Activated naive CD4-positive, alpha-beta T cell treated with anti-CD3 and anti-CD28 coated beads for 36 hours (primary cell): ENCODE measurements at regions of chr1 and their contacts with region 1.

Region 1: DNA sequence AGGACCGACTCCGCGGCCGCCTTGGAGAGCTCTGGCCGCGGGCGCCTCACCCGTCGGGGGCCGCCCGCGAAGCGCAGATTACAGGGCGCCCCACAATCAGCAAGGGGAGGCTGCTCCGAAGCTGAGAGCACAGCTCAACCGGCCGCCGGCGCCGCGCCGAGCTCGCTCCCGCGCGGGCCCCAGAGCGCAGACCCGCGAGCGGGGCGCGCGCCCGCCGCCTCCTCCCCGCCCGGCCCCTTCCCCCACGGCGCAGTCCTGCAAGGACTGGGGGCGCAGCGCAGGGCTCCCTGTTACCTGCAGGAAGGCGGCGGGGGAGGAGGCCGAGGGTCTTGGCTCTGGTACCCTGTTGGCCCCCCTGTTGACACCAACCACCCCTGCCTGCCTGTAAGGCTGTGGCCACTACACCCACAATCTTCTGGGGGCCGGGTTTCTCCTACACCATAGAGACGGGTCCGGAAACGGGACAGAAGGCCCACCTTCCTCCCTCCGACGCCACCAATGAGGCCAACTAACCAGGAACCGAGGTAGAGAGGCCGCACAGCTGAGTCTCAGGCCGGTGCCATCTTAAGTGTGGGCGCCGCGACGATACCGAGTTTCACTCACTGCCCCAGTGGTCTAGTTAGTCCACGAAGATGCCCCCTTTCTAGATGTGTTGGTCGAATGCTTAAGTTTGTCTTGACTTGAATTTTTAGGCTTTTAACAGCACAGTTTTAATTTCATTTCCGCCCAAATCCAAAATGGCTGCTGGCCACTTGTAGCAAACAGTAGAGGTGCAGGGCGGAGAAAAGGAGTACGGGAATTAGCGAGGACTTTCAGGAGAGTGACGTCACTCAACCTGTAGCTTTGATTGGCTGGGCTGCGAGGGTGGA is at the start of gene SCYL3:
- DNase-seq: peak; percentile 94
- H3K4me3 Mint-ChIP-seq: peak within 1 kb of the TSS; percentile 87
- H3K27ac Mint-ChIP-seq: peak within 1 kb of the TSS; percentile 100
- H3K4me1 Mint-ChIP-seq: peaks cover 34% of the 10 kb centered on the region
- H3K27me3 Mint-ChIP-seq: no peaks in the 10 kb centered on the region
- total RNA-seq, gene SCYL3: 8.8 TPM

Region 2: DNA sequence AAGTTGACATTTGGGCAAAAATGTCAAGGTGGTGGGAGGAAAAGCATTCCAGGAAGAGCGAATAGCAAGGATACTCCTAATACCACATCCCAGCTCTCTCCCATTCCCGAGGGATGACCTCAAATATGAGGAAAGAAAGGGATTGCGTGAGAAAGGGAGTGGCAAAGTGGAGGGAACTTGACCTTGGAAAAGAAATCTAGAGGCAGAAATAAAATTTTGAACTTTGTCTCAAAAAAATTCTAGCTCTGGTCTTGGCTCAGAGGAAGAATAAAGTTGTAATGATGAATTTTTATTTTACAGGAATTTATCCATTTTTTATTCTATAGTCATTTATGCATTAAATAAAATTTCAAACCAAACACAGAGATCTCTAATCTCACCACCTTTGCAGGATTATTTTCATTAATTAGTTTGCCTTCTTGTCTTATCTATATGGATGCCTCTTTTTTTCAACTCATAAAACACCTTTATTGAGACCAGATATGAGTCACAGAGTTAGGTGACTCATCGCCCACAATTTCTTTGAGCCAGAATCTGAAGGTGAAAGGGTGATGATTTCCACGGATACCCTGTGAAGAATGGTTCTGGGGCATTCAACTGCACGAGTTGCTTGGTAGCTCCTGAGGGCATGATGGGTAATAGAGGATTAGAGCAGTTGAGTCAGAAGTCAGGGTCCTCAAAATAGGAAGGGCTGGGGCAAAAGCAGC is 1485.0 kb before region 1 on chr1:
- CTCF ChIA-PET with region 1: no interaction called
- intact Hi-C with region 1: loop called (anchors 10 kb)
- DNase-seq: peak; percentile 82
- H3K4me3 Mint-ChIP-seq: no peak overlapping the region
- H3K27ac Mint-ChIP-seq: peak overlapping the region; percentile 32
- H3K4me1 Mint-ChIP-seq: peaks cover 34% of the 10 kb centered on the region
- H3K27me3 Mint-ChIP-seq: no peaks in the 10 kb centered on the region

Region 3: GRCh38 chr1:169595764-169596711 is 297.7 kb before region 1 on chr1:
- CTCF ChIA-PET with region 1: interaction called, 3 read pairs
- intact Hi-C with region 1: loop called (anchors 2 kb)
- DNase-seq: peak; percentile 70
- H3K4me3 Mint-ChIP-seq: no peak overlapping the region
- H3K27ac Mint-ChIP-seq: no peak overlapping the region
- H3K4me1 Mint-ChIP-seq: peaks cover 63% of the 10 kb centered on the region
- H3K27me3 Mint-ChIP-seq: no peaks in the 10 kb centered on the region

Region 4: GRCh38 chr1:169794530-169795416 is 99.0 kb before region 1 on chr1 and contains the start of gene METTL18:
- CTCF ChIA-PET with region 1: no interaction called
- intact Hi-C with region 1: loop called (anchors 1 kb)
- DNase-seq: peak; percentile 97
- H3K4me3 Mint-ChIP-seq: peak within 1 kb of the TSS; percentile 99
- H3K27ac Mint-ChIP-seq: peak within 1 kb of the TSS; percentile 99
- H3K4me1 Mint-ChIP-seq: peaks cover 48% of the 10 kb centered on the region
- H3K27me3 Mint-ChIP-seq: no peaks in the 10 kb centered on the region
- total RNA-seq, gene METTL18: 10.6 to 11.1 TPM

Region 5: GRCh38 chr1:169873607-169874209 is 20.0 kb before region 1 on chr1:
- CTCF ChIA-PET with region 1: no interaction called
- intact Hi-C with region 1: no loop called
- DNase-seq: no peak
- H3K4me3 Mint-ChIP-seq: no peak overlapping the region
- H3K27ac Mint-ChIP-seq: no peak overlapping the region
- H3K4me1 Mint-ChIP-seq: peaks cover 3% of the 10 kb centered on the region
- H3K27me3 Mint-ChIP-seq: no peaks in the 10 kb centered on the region

Region 6: GRCh38 chr1:170068923-170069322 is 175.2 kb after region 1 on chr1:
- CTCF ChIA-PET with region 1: no interaction called
- intact Hi-C with region 1: loop called (anchors 1 kb)
- DNase-seq: no peak
- H3K4me3 Mint-ChIP-seq: peak overlapping the region; percentile 13
- H3K27ac Mint-ChIP-seq: peak overlapping the region; percentile 65
- H3K4me1 Mint-ChIP-seq: peaks cover 59% of the 10 kb centered on the region
- H3K27me3 Mint-ChIP-seq: no peaks in the 10 kb centered on the region

Region 7: GRCh38 chr1:170114906-170115305 is 221.2 kb after region 1 on chr1:
- CTCF ChIA-PET with region 1: no interaction called
- intact Hi-C with region 1: no loop called
- DNase-seq: no peak
- H3K4me3 Mint-ChIP-seq: no peak overlapping the region
- H3K27ac Mint-ChIP-seq: no peak overlapping the region
- H3K4me1 Mint-ChIP-seq: no peaks in the 10 kb centered on the region
- H3K27me3 Mint-ChIP-seq: peaks cover 13% of the 10 kb centered on the region

Region 8: GRCh38 chr1:170196490-170197236 is 302.9 kb after region 1 on chr1:
- CTCF ChIA-PET with region 1: no interaction called
- intact Hi-C with region 1: no loop called
- DNase-seq: no peak
- H3K4me3 Mint-ChIP-seq: no peak overlapping the region
- H3K27ac Mint-ChIP-seq: no peak overlapping the region
- H3K4me1 Mint-ChIP-seq: no peaks in the 10 kb centered on the region
- H3K27me3 Mint-ChIP-seq: peaks cover 18% of the 10 kb centered on the region

Region 9: GRCh38 chr1:170531758-170532657 is 638.3 kb after region 1 on chr1 and contains the start of gene GORAB:
- CTCF ChIA-PET with region 1: no interaction called
- intact Hi-C with region 1: loop called (anchors 1 kb)
- DNase-seq: peak; percentile 93
- H3K4me3 Mint-ChIP-seq: no peak within 1 kb of the TSS
- H3K27ac Mint-ChIP-seq: no peak within 1 kb of the TSS
- H3K4me1 Mint-ChIP-seq: peaks cover 13% of the 10 kb centered on the region
- H3K27me3 Mint-ChIP-seq: no peaks in the 10 kb centered on the region
- total RNA-seq, gene GORAB: 9.5 TPM

Region 10: DNA sequence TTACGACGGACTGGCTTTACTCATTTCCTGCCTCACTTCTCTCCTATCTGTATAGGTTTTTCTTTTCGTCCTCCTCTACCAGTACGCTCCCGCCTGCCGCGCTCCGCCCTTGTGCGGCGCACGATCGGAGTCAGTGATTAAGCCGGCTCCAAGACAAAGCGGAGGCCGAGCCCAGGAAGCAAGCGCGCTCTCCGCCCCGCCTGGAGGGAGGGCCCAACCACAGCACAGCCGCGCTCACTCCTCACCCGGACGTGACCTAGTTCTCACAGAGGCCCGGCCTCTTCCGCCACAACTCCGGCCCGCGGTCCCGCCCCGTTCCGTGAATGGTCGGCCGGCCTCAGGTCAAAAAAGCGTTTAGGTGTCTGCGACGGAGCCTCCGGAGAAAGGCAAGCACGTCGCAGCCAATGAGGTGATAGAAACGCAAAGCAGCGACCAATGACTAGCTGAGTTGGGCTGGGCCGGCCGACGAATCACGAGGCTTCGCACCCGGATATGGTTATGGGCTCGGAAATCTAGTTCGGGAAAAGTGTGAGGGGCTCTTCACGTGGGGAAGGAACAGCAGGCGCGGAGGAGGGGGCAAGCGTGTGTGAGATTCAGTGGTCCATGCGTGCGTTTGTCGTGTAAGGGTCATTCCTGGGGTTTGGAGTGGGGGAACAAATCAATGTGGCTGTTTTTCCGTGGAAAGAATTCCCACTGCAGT is 1887.6 kb after region 1 on chr1 and contains the start of gene METTL13:
- CTCF ChIA-PET with region 1: no interaction called
- intact Hi-C with region 1: loop called (anchors 1 kb)
- DNase-seq: peak; percentile 99
- H3K4me3 Mint-ChIP-seq: peak within 1 kb of the TSS; percentile 100
- H3K27ac Mint-ChIP-seq: peak within 1 kb of the TSS; percentile 98
- H3K4me1 Mint-ChIP-seq: peaks cover 49% of the 10 kb centered on the region
- H3K27me3 Mint-ChIP-seq: no peaks in the 10 kb centered on the region
- total RNA-seq, gene METTL13: 39.5 to 40.9 TPM